Activated CD4-positive, alpha-beta T cell treated with anti-CD3 and anti-CD28 coated beads for 36 hours (primary cell): ENCODE measurements at regions of chr22 and their contacts with region 1.

Region 1: DNA sequence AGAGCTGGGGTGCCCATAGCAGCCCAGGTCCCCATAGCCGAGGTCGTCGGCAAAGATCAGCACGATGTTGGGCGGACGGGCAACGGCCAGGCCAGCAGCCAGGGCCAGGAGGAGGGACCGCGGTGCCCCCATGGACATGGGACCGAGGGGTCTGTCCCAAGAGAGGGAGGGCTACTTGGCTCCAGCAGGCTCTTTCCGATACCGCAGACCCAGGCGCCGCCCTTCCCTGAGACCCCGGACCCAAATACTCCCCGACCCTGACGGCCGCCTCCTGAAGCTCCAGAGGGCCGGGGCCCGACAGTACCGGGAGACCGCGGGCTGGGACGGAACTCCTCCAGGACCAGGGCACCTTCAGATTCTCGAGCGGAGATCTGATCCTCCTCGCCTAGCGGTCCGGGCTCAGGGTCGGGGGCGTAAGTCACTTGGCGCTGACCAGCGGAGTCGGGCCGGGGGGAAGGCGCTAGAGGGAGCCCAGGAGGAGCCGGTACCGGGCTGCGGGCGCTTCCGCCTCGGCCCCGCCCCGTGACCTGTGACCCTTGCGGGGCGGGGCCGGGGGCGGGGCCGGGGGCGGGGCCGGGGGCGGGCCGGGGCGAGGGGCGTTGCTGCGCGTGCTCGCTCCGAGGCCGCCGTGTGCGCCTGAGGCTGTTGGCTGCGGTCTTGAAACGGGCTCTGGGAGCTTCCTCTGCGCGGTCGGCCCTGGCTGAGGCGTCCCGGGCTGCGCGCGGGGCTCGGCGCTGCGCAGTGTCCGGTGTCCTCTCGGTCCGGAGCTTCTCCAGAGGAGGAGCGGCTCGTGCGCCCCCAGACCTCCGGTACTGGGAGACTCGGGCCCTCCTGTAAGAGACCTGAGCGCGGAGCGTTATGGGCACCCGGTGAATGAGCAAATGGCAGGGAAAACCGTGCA is at the start of gene ARSA:
- DNase-seq: peak; percentile 87
- ATAC-seq: peak; percentile 94
- H3K4me3 Mint-ChIP-seq: peak within 1 kb of the TSS; percentile 76
- H3K27ac Mint-ChIP-seq: peak within 1 kb of the TSS; percentile 75
- H3K4me1 Mint-ChIP-seq: peaks cover 16% of the 10 kb centered on the region
- H3K27me3 Mint-ChIP-seq: no peaks in the 10 kb centered on the region
- total RNA-seq, gene ARSA: 14.9 to 15.4 TPM

Region 2: GRCh38 chr22:50276143-50276542 is 351.7 kb before region 1 on chr22:
- CTCF ChIA-PET with region 1: no interaction called
- POLR2A ChIA-PET with region 1: no interaction called
- intact Hi-C with region 1: loop called in 1 of 2 experiments (anchors 2 kb)
- DNase-seq: peak; percentile 81
- ATAC-seq: peak; percentile 70
- H3K4me3 Mint-ChIP-seq: no peak overlapping the region
- H3K27ac Mint-ChIP-seq: no peak overlapping the region
- H3K4me1 Mint-ChIP-seq: peaks cover 1% of the 10 kb centered on the region
- H3K27me3 Mint-ChIP-seq: peaks cover 2% of the 10 kb centered on the region

Region 3: DNA sequence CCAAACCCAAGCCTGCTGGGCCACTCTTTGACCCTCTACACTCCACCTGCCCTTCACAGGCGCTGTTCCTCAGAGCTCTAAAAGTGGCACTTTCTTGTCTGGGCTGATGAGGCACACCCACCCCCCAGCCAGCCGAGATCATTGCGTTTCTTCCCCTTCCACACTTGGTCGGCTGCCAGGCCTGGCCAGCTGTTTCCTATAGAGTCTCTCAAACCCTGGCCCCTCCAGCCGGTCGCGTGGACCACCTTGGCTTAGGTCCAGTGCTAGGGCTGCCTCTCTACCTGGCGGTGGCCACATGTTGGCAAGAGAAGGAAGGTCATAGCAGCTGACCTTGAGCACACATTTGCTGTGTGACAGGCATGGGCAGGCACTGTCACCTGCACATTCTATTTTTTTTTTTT is 224.2 kb before region 1 on chr22:
- CTCF ChIA-PET with region 1: no interaction called
- POLR2A ChIA-PET with region 1: no interaction called
- intact Hi-C with region 1: no loop called
- DNase-seq: no peak
- ATAC-seq: no peak
- H3K4me3 Mint-ChIP-seq: no peak overlapping the region
- H3K27ac Mint-ChIP-seq: peak overlapping the region; percentile 39
- H3K4me1 Mint-ChIP-seq: peaks cover 11% of the 10 kb centered on the region
- H3K27me3 Mint-ChIP-seq: no peaks in the 10 kb centered on the region

Region 4: DNA sequence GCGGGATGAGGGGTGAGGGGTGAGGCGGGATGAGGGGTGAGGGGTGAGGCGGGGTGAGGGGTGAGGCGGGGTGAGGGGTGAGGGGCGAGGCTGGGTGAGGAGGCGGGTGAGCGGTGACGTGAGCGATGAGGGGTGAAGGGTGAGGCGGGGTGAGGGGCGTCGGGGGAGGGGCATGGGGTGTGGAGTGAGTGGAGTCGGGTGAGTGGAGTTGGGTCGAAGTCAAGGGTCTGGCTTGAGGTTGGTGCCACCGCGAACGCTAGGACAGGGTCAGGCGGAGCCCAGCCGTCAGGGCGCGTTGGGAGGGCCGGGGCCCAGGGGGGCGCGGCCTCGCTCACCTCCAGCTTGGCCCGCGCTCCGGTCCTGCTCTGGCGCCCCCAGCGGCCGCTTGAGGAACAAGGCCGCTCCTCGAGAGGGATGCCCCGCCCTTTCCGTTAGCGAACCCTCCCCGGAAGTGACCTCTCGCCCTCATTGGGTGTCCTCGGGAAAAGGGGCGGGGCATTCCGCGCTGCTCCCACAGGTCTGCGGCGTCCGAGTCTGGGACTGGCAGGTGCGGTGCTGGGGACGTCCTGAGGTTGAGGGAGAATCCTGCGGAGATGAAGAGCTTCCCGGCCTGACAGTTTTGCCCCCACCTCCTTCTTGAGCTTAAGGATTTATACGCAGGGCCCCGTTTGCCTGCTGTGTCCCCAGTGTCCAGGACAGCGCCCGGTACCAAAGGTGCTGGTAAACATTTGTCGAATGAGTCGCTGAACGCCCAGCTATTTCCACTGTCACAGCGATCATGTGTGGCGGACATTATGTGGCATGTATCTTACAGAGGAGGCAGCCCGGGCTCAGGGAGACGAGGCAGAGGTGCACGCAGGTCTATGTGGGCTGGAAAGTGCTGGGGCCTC is 65.1 kb before region 1 on chr22 and contains the start of gene SYCE3:
- CTCF ChIA-PET with region 1: no interaction called
- POLR2A ChIA-PET with region 1: no interaction called
- intact Hi-C with region 1: loop called in 1 of 2 experiments (anchors 1 kb)
- DNase-seq: peak; percentile 99
- ATAC-seq: peak; percentile 96
- H3K4me3 Mint-ChIP-seq: peak within 1 kb of the TSS; percentile 83
- H3K27ac Mint-ChIP-seq: peak within 1 kb of the TSS; percentile 84
- H3K4me1 Mint-ChIP-seq: peaks cover 19% of the 10 kb centered on the region
- H3K27me3 Mint-ChIP-seq: no peaks in the 10 kb centered on the region
- total RNA-seq, gene SYCE3: 3.8 TPM

Region 5: GRCh38 chr22:50612528-50613221 is 15.2 kb before region 1 on chr22:
- CTCF ChIA-PET with region 1: no interaction called
- POLR2A ChIA-PET with region 1: no interaction called
- intact Hi-C with region 1: loop called in 1 of 2 experiments (anchors 1 kb)
- DNase-seq: peak; percentile 53
- ATAC-seq: peak; percentile 81
- H3K4me3 Mint-ChIP-seq: no peak overlapping the region
- H3K27ac Mint-ChIP-seq: no peak overlapping the region
- H3K4me1 Mint-ChIP-seq: peaks cover 4% of the 10 kb centered on the region
- H3K27me3 Mint-ChIP-seq: peaks cover 7% of the 10 kb centered on the region

Region 6: GRCh38 chr22:50656122-50657070 is 28.5 kb after region 1 on chr22:
- CTCF ChIA-PET with region 1: no interaction called
- POLR2A ChIA-PET with region 1: no interaction called
- intact Hi-C with region 1: loop called in 1 of 2 experiments (anchors 1 kb)
- DNase-seq: no peak
- ATAC-seq: no peak
- H3K4me3 Mint-ChIP-seq: no peak overlapping the region
- H3K27ac Mint-ChIP-seq: no peak overlapping the region
- H3K4me1 Mint-ChIP-seq: no peaks in the 10 kb centered on the region
- H3K27me3 Mint-ChIP-seq: peaks cover 11% of the 10 kb centered on the region

Region 7: GRCh38 chr22:50674606-50675549 is 47.0 kb after region 1 on chr22:
- CTCF ChIA-PET with region 1: interaction called, 3 read pairs
- POLR2A ChIA-PET with region 1: no interaction called
- intact Hi-C with region 1: loop called in 1 of 2 experiments (anchors 5 kb)
- DNase-seq: peak; percentile 37
- ATAC-seq: peak; percentile 46
- H3K4me3 Mint-ChIP-seq: peak overlapping the region; percentile 7
- H3K27ac Mint-ChIP-seq: no peak overlapping the region
- H3K4me1 Mint-ChIP-seq: peaks cover 5% of the 10 kb centered on the region
- H3K27me3 Mint-ChIP-seq: peaks cover 30% of the 10 kb centered on the region

Region 8: GRCh38 chr22:50691521-50691920 is 63.6 kb after region 1 on chr22:
- CTCF ChIA-PET with region 1: no interaction called
- POLR2A ChIA-PET with region 1: no interaction called
- intact Hi-C with region 1: loop called (anchors 1 to 5 kb)
- DNase-seq: peak; percentile 67
- ATAC-seq: peak; percentile 36
- H3K4me3 Mint-ChIP-seq: no peak overlapping the region
- H3K27ac Mint-ChIP-seq: no peak overlapping the region
- H3K4me1 Mint-ChIP-seq: peaks cover 5% of the 10 kb centered on the region
- H3K27me3 Mint-ChIP-seq: peaks cover 4% of the 10 kb centered on the region